ENCODE measurements at regions of chr12 and their contacts with region 1.

Region 1: DNA sequence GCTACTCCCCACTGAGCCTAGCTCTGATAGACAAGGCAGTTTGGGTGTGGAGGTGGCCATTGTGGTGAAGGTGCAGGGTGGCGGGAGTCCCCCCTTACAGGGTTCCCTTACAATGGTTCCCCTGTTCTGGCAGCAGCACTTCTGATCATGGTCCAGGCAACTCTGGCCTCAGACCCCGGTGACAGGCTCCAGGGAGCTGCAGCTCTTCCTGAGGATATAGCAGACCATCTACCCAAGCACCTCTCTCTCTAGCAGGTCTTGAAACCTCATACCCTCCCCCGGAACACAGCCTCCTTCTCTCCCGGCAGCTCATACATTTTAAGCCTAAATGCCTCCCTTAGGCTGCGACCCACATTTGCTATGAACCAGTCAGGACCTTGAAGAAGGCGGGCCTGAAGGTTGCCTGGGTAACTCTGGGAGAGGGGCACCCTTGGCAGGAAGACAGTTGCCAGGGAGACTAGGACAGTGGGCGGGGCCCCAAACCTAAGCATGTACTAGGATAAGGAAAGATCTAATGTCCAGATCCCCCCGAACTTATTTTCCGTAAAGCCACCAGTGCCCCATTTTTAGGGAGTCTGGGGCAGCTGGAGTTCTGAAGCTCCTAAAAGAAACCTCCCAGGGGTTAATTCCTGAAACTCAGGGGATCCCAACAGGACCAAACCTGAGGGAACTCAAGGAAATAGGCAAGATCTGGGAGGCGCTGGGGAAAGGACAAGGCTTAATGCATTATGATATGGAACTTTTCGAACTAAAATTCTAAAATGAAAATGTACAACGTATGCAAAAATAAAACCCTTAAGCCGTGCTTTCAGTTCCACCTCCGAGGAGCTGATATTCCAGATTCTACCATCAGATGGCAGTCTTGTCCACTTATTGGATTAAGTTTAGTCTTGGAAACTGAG is 4.5 kb upstream of the GDF11 start:
- DNase-seq: peak; percentile 56 to 79
- ATAC-seq: peak; percentile 52 to 81
- H3K4me3 ChIP-seq: peak overlapping the region; percentile 45
- H3K27ac ChIP-seq: peak overlapping the region; percentile 40 to 72; a peak in 5 of 6 replicates
- H3K4me1 ChIP-seq: peaks cover 11% of the 10 kb centered on the region; the same call in 2 of the 3 replicates
- CTCF ChIP-seq: peak; percentile 95
- EP300 ChIP-seq: no peak
- POLR2A ChIP-seq: no peak
- RAD21 ChIP-seq: peak; percentile 91 to 96

Region 2: DNA sequence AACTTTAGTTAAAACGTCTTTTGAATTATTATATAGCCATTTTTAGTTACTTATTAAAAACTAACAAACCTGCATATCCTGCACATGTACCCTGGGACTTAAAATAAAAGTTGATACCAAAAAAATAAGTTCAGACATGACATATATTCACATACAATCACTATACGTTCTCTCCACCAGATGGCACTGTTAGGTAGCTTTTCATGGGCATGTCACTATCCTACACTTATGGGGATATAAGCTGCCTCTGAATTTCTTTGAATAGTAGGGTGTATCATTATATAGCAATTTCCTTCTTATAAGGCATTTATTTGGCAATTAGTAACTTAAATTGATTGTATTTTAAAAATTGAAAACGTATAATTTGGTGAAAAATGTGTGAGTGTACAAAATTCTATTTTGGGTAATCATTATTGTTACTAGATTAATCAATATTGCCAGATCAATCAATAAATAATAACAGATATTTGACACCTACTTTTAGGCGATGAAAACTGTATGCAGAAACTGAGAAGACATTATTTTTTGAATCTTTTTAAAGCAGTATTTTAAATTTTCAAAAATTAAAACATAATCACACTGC is 549.3 kb before region 1 on chr12:
- CTCF ChIA-PET with region 1: no interaction called
- POLR2A ChIA-PET with region 1: no interaction called
- DNase-seq: peak; percentile 43 to 87
- ATAC-seq: peak; percentile 95 to 97
- H3K4me3 ChIP-seq: no peak overlapping the region
- H3K27ac ChIP-seq: no peak overlapping the region
- H3K4me1 ChIP-seq: no peaks in the 10 kb centered on the region
- CTCF ChIP-seq: peak; percentile 83
- EP300 ChIP-seq: no peak
- POLR2A ChIP-seq: no peak
- RAD21 ChIP-seq: peak; percentile 83 to 92

Region 3: DNA sequence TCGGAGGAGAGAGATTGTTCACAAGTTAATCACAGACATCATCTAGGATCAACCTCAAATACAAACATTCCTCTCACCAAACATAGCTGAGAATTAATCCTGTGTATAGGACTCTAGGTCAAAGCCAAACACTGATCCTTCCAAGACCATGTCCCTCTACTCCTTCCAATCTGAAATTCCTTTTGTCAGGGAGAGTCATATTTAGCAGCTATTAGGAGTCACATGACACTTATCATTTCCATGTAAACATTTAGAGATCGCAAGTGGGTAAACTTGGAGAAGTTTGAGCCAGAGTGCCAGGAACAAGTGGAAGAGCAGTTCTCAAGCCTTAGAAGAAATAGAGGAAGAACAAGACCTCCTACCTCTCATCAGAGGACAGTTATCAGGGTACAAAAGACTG is 152.6 kb before region 1 on chr12:
- CTCF ChIA-PET with region 1: no interaction called
- POLR2A ChIA-PET with region 1: no interaction called
- DNase-seq: no peak
- ATAC-seq: no peak
- H3K4me3 ChIP-seq: no peak overlapping the region
- H3K27ac ChIP-seq: no peak overlapping the region
- H3K4me1 ChIP-seq: no peaks in the 10 kb centered on the region
- CTCF ChIP-seq: no peak
- EP300 ChIP-seq: no peak
- POLR2A ChIP-seq: no peak
- RAD21 ChIP-seq: no peak

Region 4: DNA sequence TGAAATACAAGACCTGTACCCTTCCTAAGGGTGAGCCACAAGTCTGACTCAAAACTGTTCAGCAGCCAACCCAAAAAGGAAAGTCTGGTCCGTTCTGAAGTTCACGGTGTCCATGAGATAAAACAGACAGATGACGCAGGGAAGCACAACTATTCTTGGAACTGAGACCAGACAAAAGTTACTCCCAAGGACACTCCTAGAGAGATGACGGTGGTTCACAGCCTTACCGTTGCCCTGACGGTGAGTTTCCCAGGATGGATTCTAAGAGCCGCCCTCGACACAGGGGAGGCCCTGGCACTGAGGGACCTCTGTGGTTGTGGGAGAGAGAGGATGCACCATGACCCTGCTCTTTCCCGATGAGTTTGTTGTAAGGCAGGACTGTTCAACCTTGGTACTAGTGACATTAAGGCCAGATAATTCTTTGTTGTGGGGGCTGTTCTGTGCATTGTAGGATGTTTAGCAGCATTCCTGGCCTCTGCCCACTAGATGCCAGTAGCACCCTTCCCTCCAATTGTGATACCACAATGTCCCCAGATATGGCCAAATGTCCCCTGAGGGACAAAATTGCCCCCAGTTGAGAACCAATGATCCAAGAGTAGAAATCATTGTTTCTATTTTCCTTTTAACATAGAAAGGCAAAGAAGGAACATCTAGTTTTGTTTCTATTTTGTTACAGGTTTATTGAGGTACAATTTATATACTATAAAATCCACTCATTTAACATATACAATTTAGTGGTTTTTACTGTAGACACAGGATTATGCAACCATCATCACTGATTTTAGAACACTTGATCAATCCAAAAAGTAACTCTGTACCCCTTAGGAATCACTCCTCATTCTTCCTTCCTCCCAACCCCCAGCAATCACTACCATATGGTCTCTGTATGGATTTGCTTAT is 78.6 kb before region 1 on chr12:
- CTCF ChIA-PET with region 1: interaction called, 11 read pairs
- POLR2A ChIA-PET with region 1: no interaction called
- DNase-seq: peak in 1 of 2 experiments; percentile 47
- ATAC-seq: peak; percentile 58 to 85; a peak in 4 of 6 replicates
- H3K4me3 ChIP-seq: no peak overlapping the region
- H3K27ac ChIP-seq: no peak overlapping the region
- H3K4me1 ChIP-seq: no peaks in the 10 kb centered on the region
- CTCF ChIP-seq: peak; percentile 72
- EP300 ChIP-seq: no peak
- POLR2A ChIP-seq: no peak
- RAD21 ChIP-seq: peak; percentile 77 to 86

Region 5: DNA sequence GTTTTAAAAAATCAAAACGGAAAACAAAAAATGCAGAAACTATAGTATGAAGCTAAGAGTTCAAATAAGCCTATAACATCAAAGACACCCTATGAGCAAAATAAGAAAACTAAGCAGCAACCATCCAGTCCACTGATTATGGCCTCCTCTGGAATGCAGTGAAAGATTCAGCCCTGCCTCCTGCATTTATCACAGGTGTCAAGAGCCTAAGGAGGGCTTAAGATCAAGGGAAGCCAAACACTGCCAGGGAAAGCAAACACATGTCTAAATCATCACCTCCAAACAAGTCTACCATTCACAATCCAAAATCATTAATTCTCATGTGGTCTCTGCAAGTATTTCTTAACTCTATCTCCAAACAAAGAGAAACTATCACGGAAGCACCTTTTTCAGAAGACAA is 50.8 kb after region 1 on chr12:
- CTCF ChIA-PET with region 1: interaction called, 114 read pairs
- POLR2A ChIA-PET with region 1: no interaction called
- DNase-seq: no peak
- ATAC-seq: no peak
- H3K4me3 ChIP-seq: no peak overlapping the region
- H3K27ac ChIP-seq: no peak overlapping the region
- H3K4me1 ChIP-seq: no peaks in the 10 kb centered on the region
- CTCF ChIP-seq: no peak
- EP300 ChIP-seq: no peak
- POLR2A ChIP-seq: no peak
- RAD21 ChIP-seq: no peak

Region 6: DNA sequence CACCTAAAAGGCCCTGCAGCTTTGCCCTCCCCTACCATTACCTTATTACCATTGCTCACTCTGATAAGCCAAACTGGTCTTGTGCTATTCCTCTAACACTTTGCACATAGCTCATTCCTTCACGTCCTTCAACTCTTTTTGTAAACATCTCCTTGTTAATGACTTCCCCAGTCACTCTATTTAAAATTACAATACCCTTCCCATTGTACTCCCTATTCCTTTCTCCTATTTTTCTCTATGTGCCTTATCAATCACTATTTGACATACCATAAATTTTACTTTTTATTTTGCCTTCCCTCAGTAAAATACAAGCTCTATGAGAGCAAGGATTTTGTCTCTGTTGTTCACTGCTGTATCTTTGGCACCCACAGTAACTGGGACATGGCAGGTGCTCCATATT is 73.7 kb after region 1 on chr12:
- CTCF ChIA-PET with region 1: interaction called, 25 read pairs
- POLR2A ChIA-PET with region 1: interaction called, 10 read pairs
- DNase-seq: no peak
- ATAC-seq: no peak
- H3K4me3 ChIP-seq: no peak overlapping the region
- H3K27ac ChIP-seq: no peak overlapping the region
- H3K4me1 ChIP-seq: peaks cover 9% of the 10 kb centered on the region; the same call in 2 of the 3 replicates
- CTCF ChIP-seq: no peak
- EP300 ChIP-seq: no peak
- POLR2A ChIP-seq: no peak
- RAD21 ChIP-seq: no peak

Region 7: DNA sequence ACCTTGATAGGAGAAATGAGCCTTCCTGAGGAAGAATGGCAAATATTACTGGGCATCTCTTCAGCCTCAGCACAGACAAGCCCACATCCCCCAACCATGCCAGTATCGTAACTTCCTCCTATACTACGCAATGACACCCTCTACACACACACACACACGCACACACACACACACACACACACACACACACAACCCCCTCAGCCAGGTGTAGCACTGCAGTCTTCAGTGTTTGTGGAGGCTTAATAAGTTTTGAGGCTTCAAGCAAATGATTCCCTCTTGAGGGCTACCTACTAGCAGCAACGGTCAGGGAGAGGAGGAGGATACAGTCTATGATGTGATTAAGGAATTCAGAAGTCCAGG is 194.2 kb after region 1 on chr12:
- CTCF ChIA-PET with region 1: interaction called, 36 read pairs
- POLR2A ChIA-PET with region 1: no interaction called
- DNase-seq: peak in 1 of 2 experiments; percentile 32
- ATAC-seq: peak in 1 of 2 experiments; percentile 2; a peak in 2 of 6 replicates
- H3K4me3 ChIP-seq: peak overlapping the region; percentile 54
- H3K27ac ChIP-seq: peak overlapping the region; percentile 74 to 88; a peak in 5 of 6 replicates
- H3K4me1 ChIP-seq: peaks cover 40% of the 10 kb centered on the region
- CTCF ChIP-seq: no peak
- EP300 ChIP-seq: no peak
- POLR2A ChIP-seq: no peak
- RAD21 ChIP-seq: no peak

Region 8: DNA sequence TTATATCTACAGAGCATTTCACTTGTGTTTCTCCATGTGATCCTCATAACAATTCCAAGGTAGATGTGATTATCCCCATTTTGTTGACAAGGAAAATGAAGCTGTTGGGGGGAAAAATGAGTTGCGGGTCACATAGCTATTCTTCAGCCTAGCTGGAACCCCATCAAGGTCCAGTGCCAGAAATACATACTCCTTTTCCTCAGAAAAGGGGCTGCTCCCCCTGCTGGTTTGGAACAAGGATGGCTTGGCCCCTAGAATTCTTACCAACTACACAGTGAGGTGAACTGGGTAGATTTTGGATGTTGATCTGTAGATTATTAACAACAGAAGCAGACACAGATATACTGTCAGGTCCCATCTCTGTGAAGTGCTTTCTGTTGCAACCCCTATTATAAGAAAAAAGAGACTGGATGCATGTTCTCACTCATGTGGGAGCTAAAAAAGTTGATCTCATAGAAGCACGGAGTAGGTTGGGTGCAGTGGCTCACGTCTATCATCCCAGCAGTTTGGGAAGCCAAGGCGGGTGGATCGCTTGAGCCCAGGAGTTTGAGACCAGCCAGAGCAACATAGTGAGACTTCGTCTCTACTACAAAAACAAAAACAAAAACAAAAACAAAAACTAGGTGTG is 291.4 kb after region 1 on chr12:
- CTCF ChIA-PET with region 1: interaction called, 21 read pairs
- POLR2A ChIA-PET with region 1: no interaction called
- DNase-seq: peak; percentile 67 to 78
- ATAC-seq: peak; percentile 89 to 96
- H3K4me3 ChIP-seq: no peak overlapping the region
- H3K27ac ChIP-seq: no peak overlapping the region
- H3K4me1 ChIP-seq: no peaks in the 10 kb centered on the region
- CTCF ChIP-seq: peak; percentile 82
- EP300 ChIP-seq: no peak
- POLR2A ChIP-seq: no peak
- RAD21 ChIP-seq: peak; percentile 55 to 65; a peak in 4 of 5 replicates